ENCODE measurements at regions of chr18 and their contacts with region 1.

Region 1: GRCh38 chr18:40882468-40882867 is 1072.6 kb upstream of the PIK3C3 start:
- DNase-seq: peak in 1 of 2 donors; percentile 40
- H3K4me3 ChIP-seq: no peak overlapping the region
- H3K27ac ChIP-seq: peak overlapping the region; percentile 18 to 38
- H3K4me1 ChIP-seq: no peaks in the 10 kb centered on the region
- H3K27me3 ChIP-seq: no peaks in the 10 kb centered on the region
- CTCF ChIP-seq: no peak
- POLR2A ChIP-seq: no peak

Region 2: GRCh38 chr18:40313030-40313642 is 569.3 kb before region 1 on chr18:
- intact Hi-C with region 1: no loop called
- DNase-seq: no peak
- H3K4me3 ChIP-seq: no peak overlapping the region
- H3K27ac ChIP-seq: no peak overlapping the region
- H3K4me1 ChIP-seq: no peaks in the 10 kb centered on the region
- H3K27me3 ChIP-seq: no peaks in the 10 kb centered on the region
- CTCF ChIP-seq: no peak
- POLR2A ChIP-seq: no peak

Region 3: GRCh38 chr18:40782453-40783130 is 99.9 kb before region 1 on chr18:
- intact Hi-C with region 1: no loop called
- DNase-seq: no peak
- H3K4me3 ChIP-seq: no peak overlapping the region
- H3K27ac ChIP-seq: no peak overlapping the region
- H3K4me1 ChIP-seq: no peaks in the 10 kb centered on the region
- H3K27me3 ChIP-seq: no peaks in the 10 kb centered on the region
- CTCF ChIP-seq: no peak
- POLR2A ChIP-seq: no peak

Region 4: GRCh38 chr18:41666246-41666645 is 783.8 kb after region 1 on chr18:
- intact Hi-C with region 1: loop called (anchors 5 kb)
- DNase-seq: no peak
- H3K4me3 ChIP-seq: no peak overlapping the region
- H3K27ac ChIP-seq: no peak overlapping the region
- H3K4me1 ChIP-seq: no peaks in the 10 kb centered on the region
- H3K27me3 ChIP-seq: no peaks in the 10 kb centered on the region
- CTCF ChIP-seq: no peak
- POLR2A ChIP-seq: no peak